ENCODE measurements at regions of chr10 and their contacts with region 1.

Region 1: DNA sequence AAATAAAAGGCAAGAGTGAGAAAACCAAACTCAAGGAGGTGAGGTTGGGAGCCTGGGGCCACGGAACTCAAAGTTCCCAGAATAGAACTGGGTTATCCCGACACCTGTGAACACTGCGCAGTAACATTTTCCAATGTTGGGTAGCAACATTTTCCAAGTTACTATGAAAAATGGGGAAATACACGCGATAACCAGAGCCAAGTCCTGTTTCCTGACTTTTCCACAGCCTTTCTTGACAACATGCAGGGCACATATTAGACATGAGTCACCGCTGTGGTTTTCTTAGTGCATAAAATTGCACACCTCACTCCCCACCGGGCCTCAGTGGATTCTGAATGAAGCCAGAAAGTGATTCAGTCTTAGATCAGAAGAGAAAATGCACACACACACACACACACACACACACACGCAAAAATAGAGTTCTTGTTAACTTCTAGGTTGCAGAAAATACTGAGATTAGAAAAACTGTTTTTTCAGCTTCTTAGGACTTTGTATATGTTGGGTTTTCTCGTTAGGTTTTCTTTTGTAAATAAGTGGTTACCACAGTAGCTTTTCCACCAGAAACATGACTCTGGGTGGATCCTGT is 70.0 kb downstream of the CAMK1D start:
- DNase-seq: peak; percentile 38 to 88
- H3K4me3 ChIP-seq: no peak overlapping the region
- H3K27ac ChIP-seq: peak overlapping the region; percentile 49 to 51
- H3K4me1 ChIP-seq: peaks cover 2 to 9% of the 10 kb centered on the region in 2 donors
- H3K27me3 ChIP-seq: no peaks in the 10 kb centered on the region
- CTCF ChIP-seq: no peak

Region 2: GRCh38 chr10:12264204-12264940 is 155.0 kb before region 1 on chr10:
- intact Hi-C with region 1: no loop called
- DNase-seq: peak in 1 of 2 donors; percentile 85
- H3K4me3 ChIP-seq: peak overlapping the region; percentile 12 to 56
- H3K27ac ChIP-seq: peak overlapping the region in 1 of 2 donors; percentile 54
- H3K4me1 ChIP-seq: no peaks in the 10 kb centered on the region
- H3K27me3 ChIP-seq: no peaks in the 10 kb centered on the region
- CTCF ChIP-seq: peak; percentile 86 to 96 (median 92)

Region 3: DNA sequence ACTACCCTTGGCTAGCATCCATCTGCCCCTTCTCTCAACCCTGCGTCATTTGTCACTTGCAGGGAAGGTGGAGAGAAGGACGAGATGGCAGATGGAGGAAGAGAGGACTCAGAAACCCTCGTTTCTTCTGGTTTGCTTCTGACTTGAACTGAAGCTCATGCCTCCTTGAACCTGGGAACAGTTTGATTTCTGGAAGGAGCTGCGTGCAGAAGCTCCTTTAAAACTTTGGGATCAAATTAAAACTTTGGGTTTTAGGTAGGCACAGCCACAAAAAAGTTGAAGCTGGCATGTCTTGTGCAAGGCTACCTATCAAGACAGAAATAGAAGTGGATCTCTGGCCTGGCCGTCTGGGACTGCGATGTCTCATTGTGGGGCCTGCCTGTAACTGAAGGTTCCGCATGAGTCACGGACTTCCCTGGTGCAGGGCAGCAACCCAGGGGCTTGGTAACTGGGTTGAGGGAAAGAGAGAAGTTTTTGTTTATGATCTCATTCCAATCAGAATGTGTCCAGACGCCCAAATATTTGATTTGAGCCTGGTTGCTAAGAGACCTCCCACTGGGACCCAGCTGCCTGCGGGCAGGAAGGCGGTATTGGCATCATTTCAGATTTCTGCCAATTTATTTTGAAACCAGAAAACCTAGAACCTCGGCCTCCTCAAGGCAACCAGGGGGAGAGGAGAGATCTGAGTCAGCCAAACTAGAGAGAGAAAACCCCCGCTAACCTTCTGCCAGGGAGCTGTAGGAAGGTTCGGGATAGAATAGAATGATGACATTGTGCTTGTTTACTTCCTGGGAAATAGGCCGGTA is 85.8 kb before region 1 on chr10:
- intact Hi-C with region 1: loop called (anchors 2 kb)
- DNase-seq: peak; percentile 80 to 96
- H3K4me3 ChIP-seq: peak overlapping the region in 1 of 2 donors; percentile 30
- H3K27ac ChIP-seq: peak overlapping the region; percentile 85 to 86
- H3K4me1 ChIP-seq: peaks cover 0 to 18% of the 10 kb centered on the region in 2 donors
- H3K27me3 ChIP-seq: no peaks in the 10 kb centered on the region
- CTCF ChIP-seq: no peak